Activated CD8-positive, alpha-beta memory T cell treated with anti-CD3 and anti-CD28 coated beads, Interleukin-2, amount 10 ng/mL, durations not matched to agents 7 days and 5 days (primary cell): ENCODE measurements at regions of chr2 and their contacts with region 1.

Region 1: DNA sequence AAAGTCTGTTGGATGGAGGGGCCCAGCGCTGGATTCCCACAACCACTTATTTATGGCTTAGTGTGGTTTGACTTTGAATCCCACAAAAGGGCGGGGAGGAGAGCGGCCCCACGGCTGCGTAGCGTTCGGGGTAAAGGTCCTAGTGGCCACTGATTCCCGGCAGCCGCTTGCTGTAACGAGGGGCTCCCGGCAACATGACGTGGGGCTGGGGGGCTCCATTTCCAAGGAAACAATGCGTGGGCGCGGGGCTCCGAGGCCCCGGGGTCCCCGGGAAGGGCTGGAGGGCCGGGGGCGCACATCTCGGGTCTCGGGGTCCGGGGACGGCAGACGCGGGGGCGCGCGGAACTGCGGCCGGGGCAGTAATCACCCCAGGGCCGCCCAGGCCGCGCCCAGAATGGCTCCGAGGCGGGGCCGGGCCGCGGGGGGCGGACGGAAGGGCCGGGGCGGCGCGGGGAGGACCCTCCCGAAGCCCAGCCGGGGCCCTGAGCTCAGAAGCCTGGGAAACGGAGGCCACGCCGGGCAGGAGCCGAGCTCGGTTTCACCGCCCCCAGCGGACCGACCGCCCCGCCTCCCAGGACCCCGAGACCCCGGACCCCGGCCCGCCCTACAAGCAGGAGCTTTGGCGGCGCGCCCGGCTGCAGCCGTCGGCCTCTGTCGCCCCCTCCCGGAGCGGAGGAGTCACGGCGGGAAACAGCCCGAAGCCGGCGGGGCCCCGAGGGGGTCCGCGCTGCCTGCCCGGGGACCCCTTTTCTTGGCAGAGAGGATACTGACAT is 11.9 kb upstream of the MLPH start:
- DNase-seq: peak; percentile 76
- ATAC-seq: peak; percentile 91
- H3K4me3 Mint-ChIP-seq: peak overlapping the region; percentile 72
- H3K27ac Mint-ChIP-seq: peak overlapping the region; percentile 66
- H3K4me1 Mint-ChIP-seq: peaks cover 8% of the 10 kb centered on the region
- H3K27me3 Mint-ChIP-seq: peaks cover 31% of the 10 kb centered on the region

Region 2: GRCh38 chr2:237122214-237122666 is 352.9 kb before region 1 on chr2:
- CTCF ChIA-PET with region 1: interaction called, 12 read pairs
- DNase-seq: peak; percentile 72
- ATAC-seq: peak; percentile 81
- H3K4me3 Mint-ChIP-seq: no peak overlapping the region
- H3K27ac Mint-ChIP-seq: no peak overlapping the region
- H3K4me1 Mint-ChIP-seq: peaks cover 3% of the 10 kb centered on the region
- H3K27me3 Mint-ChIP-seq: no peaks in the 10 kb centered on the region

Region 3: DNA sequence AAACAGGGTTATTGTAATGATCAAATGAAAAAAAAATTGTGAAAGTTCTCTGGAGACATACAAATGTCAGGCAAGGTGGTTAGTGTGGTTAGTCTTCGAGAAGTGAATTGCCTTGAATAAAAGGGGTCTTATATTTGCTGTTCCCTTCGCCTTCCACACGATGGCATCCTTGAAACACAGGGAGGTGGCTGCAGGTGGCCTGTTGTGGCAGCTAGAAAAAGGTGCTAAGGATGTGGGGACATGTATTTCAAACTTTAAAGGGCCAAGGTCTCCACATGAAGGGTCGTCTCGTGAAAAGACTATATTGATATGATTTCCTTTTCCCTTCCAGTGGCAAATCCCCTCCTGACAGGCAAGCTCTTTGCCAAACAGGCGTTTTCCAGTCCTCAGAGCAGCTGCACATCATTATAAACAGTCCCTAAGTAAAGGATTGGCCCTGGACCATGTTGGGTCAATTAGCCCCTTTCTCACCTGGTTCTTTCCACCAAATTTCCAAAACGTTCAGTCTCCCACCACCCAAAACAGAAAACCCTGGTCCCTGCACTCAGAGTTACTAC is 321.0 kb before region 1 on chr2:
- CTCF ChIA-PET with region 1: interaction called, 22 read pairs
- DNase-seq: peak; percentile 71
- ATAC-seq: peak; percentile 34
- H3K4me3 Mint-ChIP-seq: no peak overlapping the region
- H3K27ac Mint-ChIP-seq: no peak overlapping the region
- H3K4me1 Mint-ChIP-seq: peaks cover 38% of the 10 kb centered on the region
- H3K27me3 Mint-ChIP-seq: no peaks in the 10 kb centered on the region

Region 4: DNA sequence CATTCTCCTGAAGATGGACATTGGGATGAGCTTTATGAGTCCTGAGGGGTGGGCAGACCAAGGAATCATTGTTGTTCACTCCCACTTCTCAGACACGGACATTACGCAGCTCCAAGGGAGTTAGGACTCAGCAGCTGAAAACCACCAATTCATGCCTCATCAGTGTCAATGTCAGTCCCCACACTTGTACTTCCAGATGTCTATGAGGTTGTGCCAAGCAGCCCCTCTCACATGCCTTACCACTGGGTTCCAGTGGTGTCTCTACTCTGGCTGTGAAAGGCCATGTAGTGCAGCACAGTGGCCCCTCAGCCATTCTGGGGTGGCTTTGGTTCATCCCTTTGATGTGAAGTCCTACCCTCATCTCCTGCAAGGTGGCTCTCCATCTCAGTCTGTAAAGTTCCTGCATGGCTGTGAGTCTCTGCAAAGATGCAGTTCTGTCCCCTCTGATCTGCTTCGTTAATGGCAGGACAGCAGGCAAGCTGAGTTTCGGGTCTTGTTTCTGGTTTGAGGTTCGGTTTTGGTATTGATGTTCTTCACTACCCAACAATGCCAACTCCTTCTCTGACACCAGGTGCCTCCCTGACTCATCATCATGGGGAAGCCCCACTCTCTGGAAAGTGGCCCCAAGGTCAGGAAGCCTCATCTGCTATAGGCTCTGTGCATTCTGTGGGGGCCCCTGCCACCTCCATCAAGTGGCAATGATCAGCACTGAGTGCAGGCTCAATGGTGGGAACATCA is 47.2 kb before region 1 on chr2:
- CTCF ChIA-PET with region 1: interaction called, 128 read pairs
- DNase-seq: peak; percentile 74
- ATAC-seq: peak; percentile 69
- H3K4me3 Mint-ChIP-seq: no peak overlapping the region
- H3K27ac Mint-ChIP-seq: peak overlapping the region; percentile 67
- H3K4me1 Mint-ChIP-seq: peaks cover 55% of the 10 kb centered on the region
- H3K27me3 Mint-ChIP-seq: no peaks in the 10 kb centered on the region